ENCODE measurements at regions of chr1 and their contacts with region 1.

Region 1: GRCh38 chr1:116570358-116571200 is at the start of gene CD58:
- DNase-seq: peak; percentile 79 to 89
- ATAC-seq: peak; percentile 79 to 92 (median 86)
- H3K4me3 ChIP-seq: peak within 1 kb of the TSS; percentile 72
- H3K4me3 Mint-ChIP-seq: peak within 1 kb of the TSS; percentile 86
- H3K27ac ChIP-seq: peak within 1 kb of the TSS; percentile 82
- H3K27ac Mint-ChIP-seq: peak within 1 kb of the TSS; percentile 82 to 90
- H3K4me1 ChIP-seq: peaks cover 28% of the 10 kb centered on the region
- H3K4me1 Mint-ChIP-seq: peaks cover 56 to 60% of the 10 kb centered on the region in 2 donors
- H3K27me3 ChIP-seq: no peaks in the 10 kb centered on the region
- H3K27me3 Mint-ChIP-seq: peaks cover 4 to 11% of the 10 kb centered on the region in 2 donors
- CTCF ChIP-seq: peak; percentile 75
- total RNA-seq, gene CD58: 27.4 to 34.0 (median 28.6) TPM

Region 2: DNA sequence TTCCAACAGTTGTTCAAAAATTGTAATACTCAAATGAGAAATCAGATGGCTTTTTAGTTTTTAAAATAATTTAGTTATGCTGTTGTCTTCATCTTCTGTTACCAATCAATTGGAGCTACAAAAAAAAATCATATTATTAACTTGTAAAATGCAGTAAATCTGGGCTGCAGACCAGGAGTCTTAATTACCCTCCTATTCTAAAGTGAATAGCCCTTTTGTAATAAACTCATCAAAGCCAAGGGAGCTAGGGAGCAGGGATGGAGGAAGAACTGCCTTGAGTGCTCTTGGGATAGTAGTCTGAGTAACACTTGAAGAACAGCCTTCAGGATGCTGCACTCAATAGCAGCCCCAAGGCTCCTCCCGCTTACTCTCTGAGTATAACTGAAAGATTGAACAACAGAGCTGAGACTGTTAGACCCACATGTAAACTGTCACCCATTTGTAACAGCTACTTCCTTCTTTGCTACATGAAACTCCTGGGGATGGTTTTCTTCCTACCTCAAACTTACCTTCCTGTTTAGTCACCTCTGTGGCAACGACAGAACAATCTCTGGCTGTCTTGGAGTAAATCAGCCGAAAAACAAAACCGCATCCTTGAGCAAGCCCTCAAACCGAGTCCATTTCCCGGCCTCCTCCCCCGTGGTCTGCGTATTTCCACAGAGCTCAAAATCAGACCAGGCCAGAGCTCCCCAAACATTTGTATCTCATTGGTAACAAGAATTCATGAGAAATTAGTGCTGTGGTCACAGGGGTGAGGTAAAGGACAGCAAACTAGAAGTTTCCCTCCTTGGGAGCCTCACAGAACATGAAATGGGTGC is 55.7 kb before region 1 on chr1:
- intact Hi-C with region 1: loop called (anchors 5 kb)
- DNase-seq: peak; percentile 54 to 83
- ATAC-seq: peak; percentile 75 to 86 (median 76)
- H3K4me3 ChIP-seq: no peak overlapping the region
- H3K4me3 Mint-ChIP-seq: peak overlapping the region; percentile 82
- H3K27ac ChIP-seq: peak overlapping the region; percentile 88
- H3K27ac Mint-ChIP-seq: peak overlapping the region; percentile 99 to 100
- H3K4me1 ChIP-seq: peaks cover 54% of the 10 kb centered on the region
- H3K4me1 Mint-ChIP-seq: peaks cover 68 to 69% of the 10 kb centered on the region in 2 donors
- H3K27me3 ChIP-seq: no peaks in the 10 kb centered on the region
- H3K27me3 Mint-ChIP-seq: no peaks in the 10 kb centered on the region
- CTCF ChIP-seq: no peak

Region 3: GRCh38 chr1:116737020-116737854 is 166.7 kb after region 1 on chr1:
- intact Hi-C with region 1: loop called (anchors 5 kb)
- DNase-seq: peak; percentile 60 to 90
- ATAC-seq: peak; percentile 53 to 58 (median 58)
- H3K4me3 ChIP-seq: no peak overlapping the region
- H3K4me3 Mint-ChIP-seq: peak overlapping the region; percentile 78
- H3K27ac ChIP-seq: peak overlapping the region; percentile 85
- H3K27ac Mint-ChIP-seq: peak overlapping the region; percentile 94 to 97
- H3K4me1 ChIP-seq: peaks cover 51% of the 10 kb centered on the region
- H3K4me1 Mint-ChIP-seq: peaks cover 46% of the 10 kb centered on the region in 2 donors
- H3K27me3 ChIP-seq: no peaks in the 10 kb centered on the region
- H3K27me3 Mint-ChIP-seq: no peaks in the 10 kb centered on the region
- CTCF ChIP-seq: peak; percentile 93

Region 4: DNA sequence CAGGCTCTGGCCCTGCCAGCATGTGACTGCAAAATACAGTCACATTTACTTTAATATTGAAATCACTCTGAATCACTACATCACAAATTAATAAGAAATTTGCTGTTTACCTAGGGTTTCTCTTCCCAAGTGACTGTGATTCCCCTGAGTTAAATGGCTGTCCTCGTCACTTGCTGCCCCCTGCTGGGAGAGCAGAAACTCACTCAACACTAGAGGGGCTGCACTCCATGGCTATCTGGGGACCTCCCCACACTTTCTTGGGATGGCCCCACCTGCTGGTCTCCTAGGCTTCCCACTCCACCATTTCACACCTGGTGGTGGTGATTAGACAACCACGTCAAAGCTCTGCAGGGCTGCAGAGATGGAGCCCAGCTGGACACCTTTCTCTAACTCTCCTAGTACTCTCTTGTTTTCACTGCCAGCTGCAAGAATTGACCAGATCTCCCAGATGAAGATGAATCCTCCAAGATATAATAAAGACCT is 247.0 kb after region 1 on chr1:
- intact Hi-C with region 1: loop called (anchors 5 kb)
- DNase-seq: peak; percentile 54 to 88
- ATAC-seq: peak; percentile 67 to 76 (median 71)
- H3K4me3 ChIP-seq: no peak overlapping the region
- H3K4me3 Mint-ChIP-seq: peak overlapping the region; percentile 67
- H3K27ac ChIP-seq: no peak overlapping the region
- H3K27ac Mint-ChIP-seq: peak overlapping the region; percentile 48 to 90
- H3K4me1 ChIP-seq: peaks cover 29% of the 10 kb centered on the region
- H3K4me1 Mint-ChIP-seq: peaks cover 36 to 42% of the 10 kb centered on the region in 2 donors
- H3K27me3 ChIP-seq: no peaks in the 10 kb centered on the region
- H3K27me3 Mint-ChIP-seq: no peaks in the 10 kb centered on the region
- CTCF ChIP-seq: peak; percentile 78

Region 5: DNA sequence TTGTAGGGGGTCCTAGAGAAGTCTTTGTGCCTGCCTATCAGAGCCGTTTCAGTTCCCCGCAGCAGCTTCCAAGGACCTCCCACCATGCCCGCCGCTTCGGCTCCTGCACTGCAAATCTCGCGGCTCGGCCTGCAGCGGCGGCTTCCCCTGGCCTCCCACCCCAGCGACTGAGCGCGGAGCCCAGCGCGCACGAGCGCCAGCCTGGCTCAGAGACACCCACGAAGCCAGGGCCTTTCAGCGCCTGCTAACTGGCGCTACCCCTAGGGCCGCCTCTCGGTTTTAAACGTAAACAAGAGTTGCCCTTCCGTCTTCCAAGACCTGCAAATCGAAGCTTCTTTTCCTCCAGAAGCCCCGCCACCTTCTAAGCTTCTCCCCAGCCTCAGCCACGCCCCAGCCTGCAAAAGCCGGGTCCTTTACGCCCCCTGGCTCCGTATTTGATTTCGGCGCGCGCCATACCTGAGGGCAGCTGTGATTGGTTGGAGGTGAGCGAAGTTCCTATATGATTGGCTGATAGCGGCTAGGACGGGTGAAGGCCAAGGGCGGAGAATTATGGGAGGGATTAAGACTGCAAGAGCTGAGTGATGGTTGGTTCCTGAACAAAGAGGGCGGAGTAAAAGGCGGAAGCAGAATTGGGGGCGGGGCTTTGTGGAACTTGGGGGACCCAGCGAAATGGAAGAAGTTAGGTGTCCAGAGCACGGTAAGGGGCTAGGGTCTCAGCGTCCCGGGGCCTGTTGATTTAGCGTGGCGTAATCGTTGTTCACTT is 489.3 kb after region 1 on chr1 and contains the start of gene TTF2:
- intact Hi-C with region 1: loop called (anchors 1 kb)
- DNase-seq: peak; percentile 90 to 98
- ATAC-seq: peak; percentile 92 to 98 (median 94)
- H3K4me3 ChIP-seq: peak within 1 kb of the TSS; percentile 58
- H3K4me3 Mint-ChIP-seq: no peak within 1 kb of the TSS
- H3K27ac ChIP-seq: peak within 1 kb of the TSS; percentile 54
- H3K27ac Mint-ChIP-seq: no peak within 1 kb of the TSS
- H3K4me1 ChIP-seq: peaks cover 16% of the 10 kb centered on the region
- H3K4me1 Mint-ChIP-seq: peaks cover 9 to 16% of the 10 kb centered on the region in 2 donors
- H3K27me3 ChIP-seq: no peaks in the 10 kb centered on the region
- H3K27me3 Mint-ChIP-seq: no peaks in the 10 kb centered on the region
- CTCF ChIP-seq: no peak
- total RNA-seq, gene TTF2: 17.9 to 24.7 (median 23.9) TPM

Region 6: DNA sequence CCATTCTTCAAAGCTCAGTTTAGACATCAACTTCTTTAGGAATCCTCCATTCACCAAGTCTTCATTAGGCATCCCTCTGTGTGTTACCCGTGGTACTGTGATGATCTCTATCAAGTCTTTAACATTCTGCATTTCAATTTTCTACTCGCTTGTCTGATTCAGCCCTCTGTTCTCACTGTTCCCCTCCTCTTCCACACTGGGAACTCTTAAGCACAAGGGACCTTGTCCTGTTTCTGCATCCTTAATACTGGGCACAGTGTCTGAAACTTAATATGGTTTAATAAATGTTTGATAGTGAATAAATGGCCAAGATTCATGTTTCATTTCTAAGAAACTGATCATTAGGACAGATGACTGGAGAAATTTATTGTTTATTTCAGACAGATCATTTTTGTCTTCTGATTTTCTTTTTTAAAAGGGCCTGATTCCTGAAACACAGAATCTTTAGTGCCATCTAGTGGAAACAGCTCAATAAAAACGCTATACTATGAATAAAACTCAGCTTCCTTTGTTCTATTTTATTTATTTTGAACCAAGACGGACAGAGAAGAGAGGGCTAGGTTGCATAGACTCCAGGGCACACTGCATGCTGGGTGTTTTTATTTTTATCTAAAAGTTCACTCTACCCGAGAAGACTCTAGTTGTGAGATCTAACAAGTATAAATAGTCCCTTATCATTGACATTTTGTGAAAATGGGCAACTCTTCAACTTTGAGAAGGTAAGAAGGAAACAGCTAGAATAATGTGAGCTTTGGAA is 557.9 kb after region 1 on chr1:
- intact Hi-C with region 1: loop called (anchors 5 kb)
- DNase-seq: peak in 1 of 2 donors; percentile 56
- ATAC-seq: peak in 1 of 3 donors; percentile 52
- H3K4me3 ChIP-seq: no peak overlapping the region
- H3K4me3 Mint-ChIP-seq: no peak overlapping the region
- H3K27ac ChIP-seq: no peak overlapping the region
- H3K27ac Mint-ChIP-seq: no peak overlapping the region
- H3K4me1 ChIP-seq: no peaks in the 10 kb centered on the region
- H3K4me1 Mint-ChIP-seq: no peaks in the 10 kb centered on the region
- H3K27me3 ChIP-seq: no peaks in the 10 kb centered on the region
- H3K27me3 Mint-ChIP-seq: peaks cover 5 to 14% of the 10 kb centered on the region in 2 donors
- CTCF ChIP-seq: peak; percentile 43

Measured in natural killer cell (primary cell).